ENCODE measurements at regions of chr4 and their contacts with region 1.

Region 1: GRCh38 chr4:154779362-154779947 is 1.6 kb upstream of the RBM46 start:
- DNase-seq: peak; percentile 68
- H3K4me3 ChIP-seq: no peak overlapping the region
- H3K27ac ChIP-seq: no peak overlapping the region
- H3K4me1 ChIP-seq: no peaks in the 10 kb centered on the region
- H3K27me3 ChIP-seq: peaks cover 39% of the 10 kb centered on the region

Region 2: GRCh38 chr4:152850377-152850776 is 1929.1 kb before region 1 on chr4:
- in situ Hi-C with region 1: no loop called
- DNase-seq: peak; percentile 50
- H3K4me3 ChIP-seq: no peak overlapping the region
- H3K27ac ChIP-seq: no peak overlapping the region
- H3K4me1 ChIP-seq: peaks cover 8% of the 10 kb centered on the region; the same call in 1 of the 2 replicates
- H3K27me3 ChIP-seq: no peaks in the 10 kb centered on the region

Region 3: DNA sequence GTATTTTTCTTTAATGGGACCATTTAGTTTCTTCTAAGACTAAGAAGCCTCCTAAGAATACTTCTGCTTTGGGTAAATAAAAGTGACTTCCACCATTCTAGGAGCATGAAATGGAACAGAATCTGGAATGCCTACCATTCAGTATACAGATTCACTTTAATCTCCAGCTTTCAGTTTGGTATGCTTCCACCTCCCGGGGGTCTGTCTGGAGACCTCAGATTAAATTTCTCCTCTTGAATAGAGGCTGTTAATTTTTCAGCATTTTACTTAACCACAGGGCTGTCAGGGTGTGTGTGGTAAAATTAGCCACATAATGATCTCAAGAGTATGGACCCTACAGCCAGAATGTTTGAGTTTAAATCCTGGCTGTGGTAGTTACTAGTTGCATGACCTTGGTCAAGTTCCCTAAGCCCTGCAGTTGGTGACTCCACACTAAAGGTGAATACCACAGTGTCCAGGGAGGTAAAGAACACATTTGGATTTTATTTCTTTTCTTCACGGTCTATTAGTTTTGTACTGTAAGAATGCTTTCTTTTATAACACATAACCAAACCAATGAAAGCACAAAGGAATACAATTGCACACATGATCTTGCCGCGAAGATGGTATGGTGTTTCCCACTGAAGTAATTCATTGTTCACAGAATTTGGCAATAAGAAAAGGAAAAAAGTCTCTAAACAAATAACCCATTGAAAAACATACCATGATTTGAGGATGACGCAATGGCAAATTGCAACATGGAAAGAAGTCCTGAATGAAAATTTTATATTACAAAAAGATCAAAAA is 1612.5 kb before region 1 on chr4:
- in situ Hi-C with region 1: no loop called
- DNase-seq: peak; percentile 56
- H3K4me3 ChIP-seq: no peak overlapping the region
- H3K27ac ChIP-seq: no peak overlapping the region
- H3K4me1 ChIP-seq: no peaks in the 10 kb centered on the region
- H3K27me3 ChIP-seq: no peaks in the 10 kb centered on the region

Region 4: DNA sequence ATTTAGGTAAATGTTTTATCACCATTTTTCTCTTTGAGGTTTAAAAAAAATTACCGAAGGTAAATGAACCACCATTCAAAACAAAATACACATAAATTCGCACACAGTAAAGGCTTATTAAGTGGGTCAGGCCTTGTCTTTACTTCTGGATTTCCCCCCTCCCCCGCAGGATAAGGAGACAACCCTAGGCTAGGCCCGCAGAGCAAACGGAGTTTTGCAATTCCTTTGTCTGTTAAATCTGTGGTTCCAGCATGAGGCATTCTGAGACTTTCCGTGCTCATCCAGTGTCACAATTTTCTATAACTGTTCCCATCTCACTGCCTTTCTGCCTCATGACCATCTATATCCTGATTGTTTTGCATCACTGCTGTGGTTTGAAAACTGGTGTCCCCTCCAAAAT is 595.2 kb before region 1 on chr4:
- in situ Hi-C with region 1: no loop called
- DNase-seq: no peak
- H3K4me3 ChIP-seq: no peak overlapping the region
- H3K27ac ChIP-seq: no peak overlapping the region
- H3K4me1 ChIP-seq: peaks cover 11% of the 10 kb centered on the region
- H3K27me3 ChIP-seq: no peaks in the 10 kb centered on the region

Region 5: GRCh38 chr4:154526151-154526550 is 253.3 kb before region 1 on chr4:
- in situ Hi-C with region 1: no loop called
- DNase-seq: no peak
- H3K4me3 ChIP-seq: no peak overlapping the region
- H3K27ac ChIP-seq: no peak overlapping the region
- H3K4me1 ChIP-seq: no peaks in the 10 kb centered on the region
- H3K27me3 ChIP-seq: 0 out of 2 replicates have a peak, but pooled peaks cover 18% of the 10 kb centered on the region

Region 6: DNA sequence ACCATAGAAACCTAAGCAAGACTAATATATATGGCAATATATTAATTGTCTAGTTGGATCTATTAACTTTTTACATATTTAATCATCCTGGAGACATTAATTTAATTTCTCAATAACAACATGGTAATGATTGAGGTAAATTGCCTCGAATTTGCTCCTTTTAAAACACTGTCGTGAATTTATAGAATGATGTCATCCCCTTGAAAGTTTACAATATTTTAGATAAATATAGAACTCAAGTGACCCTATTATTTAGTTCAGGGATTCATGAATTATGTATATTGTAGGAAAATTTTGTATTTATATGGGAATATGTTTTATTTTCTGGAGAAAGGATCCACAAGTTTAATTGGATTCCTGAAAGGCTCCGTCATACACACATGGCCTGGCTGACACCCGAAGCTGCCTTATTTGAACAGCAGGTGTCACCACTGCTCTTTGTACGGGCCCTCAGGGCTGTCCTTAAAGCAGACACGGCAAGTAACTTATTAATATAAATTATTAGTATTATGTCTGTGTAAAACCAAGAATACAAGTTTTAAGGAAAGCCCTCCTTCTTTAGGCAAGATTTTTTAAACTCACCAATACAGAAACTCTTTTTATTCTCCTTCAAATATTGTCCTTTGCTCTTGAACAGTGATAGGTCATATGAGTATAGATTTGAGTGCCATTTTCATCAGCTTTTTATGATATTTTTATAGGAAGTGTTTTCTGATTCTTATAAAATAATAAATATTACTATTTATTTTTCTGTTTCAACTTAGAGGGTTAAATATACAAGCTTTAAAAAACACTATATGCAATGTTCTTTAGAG is 227.4 kb before region 1 on chr4:
- in situ Hi-C with region 1: loop called (anchors 10 kb)
- DNase-seq: peak; percentile 89
- H3K4me3 ChIP-seq: no peak overlapping the region
- H3K27ac ChIP-seq: no peak overlapping the region
- H3K4me1 ChIP-seq: peaks cover 10% of the 10 kb centered on the region
- H3K27me3 ChIP-seq: no peaks in the 10 kb centered on the region

Measured in GM23248 (cell line).